Endothelial cell of umbilical vein (primary cell): ENCODE measurements at regions of chr3 and their contacts with region 1.

Region 1: GRCh38 chr3:177197041-177197727 is at the start of gene TBL1XR1:
- DNase-seq: peak; percentile 91
- H3K4me3 ChIP-seq: peak within 1 kb of the TSS; percentile 84 to 97 (median 95)
- H3K27ac ChIP-seq: peak within 1 kb of the TSS; percentile 93
- H3K4me1 ChIP-seq: peaks cover 32% of the 10 kb centered on the region
- H3K27me3 ChIP-seq: no peaks in the 10 kb centered on the region
- CTCF ChIP-seq: no peak
- POLR2A ChIP-seq: no peak
- total RNA-seq, gene TBL1XR1: 146 and 152 TPM in 2 replicates

Region 2: DNA sequence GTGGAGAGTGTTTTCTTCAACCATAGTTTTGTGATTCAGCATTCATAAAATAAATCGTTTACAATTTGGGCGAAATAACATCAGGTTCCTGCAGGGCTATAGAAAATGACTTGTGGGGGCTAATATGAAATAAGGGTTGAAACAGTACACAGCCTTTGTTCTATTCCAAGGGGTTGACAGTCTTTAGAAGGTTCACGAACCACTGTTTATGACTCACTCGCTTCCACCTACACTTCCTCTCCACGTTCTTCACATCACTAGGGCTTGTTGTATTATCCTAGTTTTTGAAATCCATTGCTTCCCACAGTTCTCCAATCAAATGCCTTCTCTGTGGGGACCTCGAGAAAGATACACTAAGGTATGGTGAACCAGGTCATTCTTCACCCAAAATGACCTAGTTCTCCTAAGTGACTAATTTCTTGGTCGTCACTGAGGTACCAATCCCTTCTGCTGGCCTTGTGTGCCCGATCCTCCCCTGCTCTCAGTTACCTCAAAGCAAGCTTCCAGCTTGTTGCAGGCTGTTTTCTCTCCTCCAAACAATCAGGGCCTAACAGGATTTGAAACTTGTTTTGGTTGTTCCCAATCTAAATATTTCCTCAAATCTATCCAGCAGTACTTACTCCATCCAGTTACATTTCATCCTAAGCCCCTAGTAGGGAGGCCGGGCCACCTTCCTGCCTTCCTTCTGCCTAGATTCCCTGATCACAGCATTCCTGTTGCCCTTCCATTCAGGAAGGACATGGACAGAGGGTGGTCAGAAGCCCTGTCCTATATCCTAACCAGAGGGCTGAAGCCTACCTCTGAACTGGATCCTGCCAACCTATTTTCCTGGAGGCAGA is 23.2 kb after region 1 on chr3:
- CTCF ChIA-PET with region 1: no interaction called
- POLR2A ChIA-PET with region 1: no interaction called
- dilution Hi-C with region 1: no loop called
- intact Hi-C with region 1: no loop called
- DNase-seq: no peak
- H3K4me3 ChIP-seq: no peak overlapping the region
- H3K27ac ChIP-seq: no peak overlapping the region
- H3K4me1 ChIP-seq: no peaks in the 10 kb centered on the region
- H3K27me3 ChIP-seq: no peaks in the 10 kb centered on the region
- CTCF ChIP-seq: no peak
- POLR2A ChIP-seq: no peak

Region 3: DNA sequence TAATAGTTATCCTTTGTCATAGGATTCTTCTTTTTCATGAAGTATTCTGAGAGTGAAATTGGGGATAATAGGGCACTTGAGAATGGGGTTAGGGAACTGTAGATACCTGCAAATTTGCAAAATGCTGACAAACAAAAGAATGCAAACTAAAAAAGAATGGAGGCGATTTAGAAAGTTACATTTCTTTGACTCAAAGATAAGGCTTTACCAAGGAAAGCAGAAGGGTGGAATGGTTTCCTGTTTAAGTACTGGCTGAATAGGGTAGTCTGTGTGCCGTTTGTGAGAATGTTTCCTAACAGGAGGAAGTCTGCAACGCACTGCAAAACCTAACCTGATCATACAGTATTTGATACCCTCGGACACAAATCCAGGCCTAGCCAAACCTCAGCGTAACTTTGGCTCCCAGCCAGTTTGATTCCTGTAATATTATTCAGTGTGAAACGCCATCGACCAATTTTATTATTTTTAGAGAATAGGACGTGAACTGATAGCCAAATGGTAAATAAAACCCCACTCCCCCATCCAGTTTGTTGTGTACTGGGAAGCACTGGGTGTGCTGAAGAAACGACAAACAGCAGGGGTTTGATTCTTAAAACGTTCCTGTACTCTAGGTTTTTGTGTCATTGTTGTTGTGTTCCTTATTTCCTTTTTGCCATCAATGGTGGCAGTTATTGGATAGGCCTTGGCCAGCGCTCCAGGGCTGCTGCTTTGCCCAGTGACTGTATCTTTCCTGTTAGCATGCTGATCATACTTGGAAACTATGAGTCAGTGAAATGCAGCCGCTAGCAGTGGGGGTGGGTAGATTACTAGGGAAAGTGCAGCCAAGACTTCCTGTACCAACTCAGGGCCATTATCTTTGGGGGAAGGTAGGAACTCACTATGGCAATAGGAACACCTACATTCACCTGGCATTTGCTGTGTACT is 148.1 kb after region 1 on chr3:
- CTCF ChIA-PET with region 1: interaction called, 3 read pairs
- POLR2A ChIA-PET with region 1: interaction called, 3 read pairs
- dilution Hi-C with region 1: no loop called
- intact Hi-C with region 1: loop called (anchors 1 kb)
- DNase-seq: peak; percentile 97
- H3K4me3 ChIP-seq: peak overlapping the region in 1 of 3 experiments; percentile 28
- H3K27ac ChIP-seq: peak overlapping the region; percentile 99
- H3K4me1 ChIP-seq: peaks cover 34% of the 10 kb centered on the region
- H3K27me3 ChIP-seq: no peaks in the 10 kb centered on the region
- CTCF ChIP-seq: no peak
- POLR2A ChIP-seq: peak; percentile 57

Region 4: DNA sequence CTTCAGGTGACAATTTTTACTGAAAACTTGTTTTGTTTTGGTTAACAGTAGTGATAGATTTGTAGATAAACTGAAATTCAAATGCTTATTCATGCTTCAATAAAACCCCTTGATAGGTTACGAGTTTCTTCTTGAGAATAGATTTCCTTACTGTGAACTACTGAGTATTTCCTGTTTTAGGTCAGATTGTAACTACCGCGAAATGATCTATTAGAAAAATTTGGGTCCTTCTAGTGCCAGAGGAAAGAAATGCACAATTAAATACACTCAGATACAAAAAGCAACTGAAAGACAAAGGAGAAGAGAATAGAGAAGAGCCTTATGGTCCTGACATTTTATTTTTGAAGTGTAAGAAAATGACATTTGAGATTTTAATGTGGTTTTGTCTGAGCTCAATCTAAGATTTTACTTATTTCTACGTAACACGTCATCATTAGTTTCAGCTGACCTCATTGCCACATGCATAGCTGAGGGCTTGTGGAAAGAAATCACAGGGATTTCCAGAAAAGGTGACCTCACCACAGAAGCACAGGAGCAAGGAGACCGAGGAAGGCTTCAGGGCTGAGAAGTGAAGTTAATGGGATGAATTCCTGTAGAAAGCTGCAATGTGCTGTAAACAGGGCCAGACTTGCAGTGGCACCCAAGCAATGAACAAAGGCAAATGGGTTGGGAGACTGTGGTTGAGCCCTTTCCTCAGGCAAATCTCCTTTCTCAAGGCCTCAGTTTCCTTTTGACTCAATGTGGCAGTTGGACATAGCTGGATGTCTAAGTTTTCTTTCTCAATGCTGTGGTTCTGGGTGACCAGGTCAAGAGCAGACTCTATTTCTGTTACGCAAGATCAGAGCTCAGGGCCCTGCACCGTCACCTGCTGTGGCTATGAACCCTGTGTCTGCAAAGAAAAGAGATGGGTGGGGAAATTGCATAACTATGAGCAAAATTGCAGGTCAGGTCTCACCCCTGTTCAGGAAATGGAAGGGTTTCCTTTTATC is 252.1 kb after region 1 on chr3:
- CTCF ChIA-PET with region 1: no interaction called
- POLR2A ChIA-PET with region 1: no interaction called
- dilution Hi-C with region 1: no loop called
- intact Hi-C with region 1: loop called (anchors 1 kb)
- DNase-seq: no peak
- H3K4me3 ChIP-seq: no peak overlapping the region
- H3K27ac ChIP-seq: no peak overlapping the region
- H3K4me1 ChIP-seq: peaks cover 23% of the 10 kb centered on the region
- H3K27me3 ChIP-seq: no peaks in the 10 kb centered on the region
- CTCF ChIP-seq: no peak
- POLR2A ChIP-seq: no peak

Region 5: GRCh38 chr3:177679568-177680441 is 482.6 kb after region 1 on chr3:
- CTCF ChIA-PET with region 1: no interaction called
- POLR2A ChIA-PET with region 1: no interaction called
- dilution Hi-C with region 1: no loop called
- intact Hi-C with region 1: loop called (anchors 1 kb)
- DNase-seq: peak; percentile 76
- H3K4me3 ChIP-seq: no peak overlapping the region
- H3K27ac ChIP-seq: peak overlapping the region; percentile 72
- H3K4me1 ChIP-seq: peaks cover 45% of the 10 kb centered on the region
- H3K27me3 ChIP-seq: no peaks in the 10 kb centered on the region
- CTCF ChIP-seq: no peak
- POLR2A ChIP-seq: no peak

Region 6: GRCh38 chr3:177893321-177893720 is 696.1 kb after region 1 on chr3:
- CTCF ChIA-PET with region 1: no interaction called
- POLR2A ChIA-PET with region 1: no interaction called
- dilution Hi-C with region 1: no loop called
- intact Hi-C with region 1: loop called (anchors 5 kb)
- DNase-seq: peak; percentile 35
- H3K4me3 ChIP-seq: no peak overlapping the region
- H3K27ac ChIP-seq: peak overlapping the region; percentile 66
- H3K4me1 ChIP-seq: peaks cover 21% of the 10 kb centered on the region
- H3K27me3 ChIP-seq: no peaks in the 10 kb centered on the region
- CTCF ChIP-seq: peak; percentile 16 to 28
- POLR2A ChIP-seq: no peak

Region 7: DNA sequence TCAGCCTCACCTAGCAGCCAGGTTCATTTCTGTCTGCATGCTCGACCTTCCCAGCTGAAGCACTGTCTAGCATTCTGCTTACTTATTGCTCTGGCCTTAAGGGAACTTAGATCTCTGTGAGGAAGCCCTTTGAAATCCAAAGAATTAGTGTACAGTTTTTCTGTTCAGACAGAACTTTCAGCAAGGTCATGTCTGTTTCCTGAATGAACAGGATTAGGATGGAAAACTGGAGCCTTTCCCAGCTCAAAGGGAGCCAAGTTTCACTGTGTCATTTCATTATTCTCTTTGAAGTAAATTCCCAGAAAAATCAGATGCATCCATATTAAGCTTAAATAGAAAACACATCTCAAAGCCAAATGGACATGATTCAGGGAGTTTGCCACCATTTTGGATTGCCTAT is 881.8 kb after region 1 on chr3:
- CTCF ChIA-PET with region 1: no interaction called
- POLR2A ChIA-PET with region 1: interaction called, 4 read pairs
- dilution Hi-C with region 1: no loop called
- intact Hi-C with region 1: loop called (anchors 10 kb)
- DNase-seq: peak; percentile 99
- H3K4me3 ChIP-seq: no peak overlapping the region
- H3K27ac ChIP-seq: peak overlapping the region; percentile 81
- H3K4me1 ChIP-seq: peaks cover 26% of the 10 kb centered on the region
- H3K27me3 ChIP-seq: no peaks in the 10 kb centered on the region
- CTCF ChIP-seq: no peak
- POLR2A ChIP-seq: no peak

Region 8: GRCh38 chr3:178325330-178325729 is 1128.1 kb after region 1 on chr3:
- CTCF ChIA-PET with region 1: no interaction called
- POLR2A ChIA-PET with region 1: no interaction called
- dilution Hi-C with region 1: no loop called
- intact Hi-C with region 1: loop called (anchors 2 kb)
- DNase-seq: peak; percentile 76
- H3K4me3 ChIP-seq: no peak overlapping the region
- H3K27ac ChIP-seq: peak overlapping the region; percentile 2
- H3K4me1 ChIP-seq: peaks cover 13% of the 10 kb centered on the region
- H3K27me3 ChIP-seq: no peaks in the 10 kb centered on the region
- CTCF ChIP-seq: peak in 1 of 2 donors; percentile 15
- POLR2A ChIP-seq: no peak